Activated naive CD4-positive, alpha-beta T cell treated with anti-CD3 and anti-CD28 coated beads for 36 hours (primary cell): ENCODE measurements at regions of chr15 and their contacts with region 1.

Region 1: GRCh38 chr15:98647774-98648653 is at the start of gene IGF1R:
- DNase-seq: peak; percentile 85
- H3K4me3 Mint-ChIP-seq: peak within 1 kb of the TSS; percentile 87
- H3K27ac Mint-ChIP-seq: peak within 1 kb of the TSS; percentile 94
- H3K4me1 Mint-ChIP-seq: peaks cover 25% of the 10 kb centered on the region
- H3K27me3 Mint-ChIP-seq: no peaks in the 10 kb centered on the region
- total RNA-seq, gene IGF1R: 25.6 to 26.6 TPM

Region 2: GRCh38 chr15:98382139-98382538 is 265.9 kb before region 1 on chr15:
- CTCF ChIA-PET with region 1: no interaction called
- intact Hi-C with region 1: no loop called
- DNase-seq: no peak
- H3K4me3 Mint-ChIP-seq: no peak overlapping the region
- H3K27ac Mint-ChIP-seq: no peak overlapping the region
- H3K4me1 Mint-ChIP-seq: no peaks in the 10 kb centered on the region
- H3K27me3 Mint-ChIP-seq: peaks cover 33% of the 10 kb centered on the region

Region 3: DNA sequence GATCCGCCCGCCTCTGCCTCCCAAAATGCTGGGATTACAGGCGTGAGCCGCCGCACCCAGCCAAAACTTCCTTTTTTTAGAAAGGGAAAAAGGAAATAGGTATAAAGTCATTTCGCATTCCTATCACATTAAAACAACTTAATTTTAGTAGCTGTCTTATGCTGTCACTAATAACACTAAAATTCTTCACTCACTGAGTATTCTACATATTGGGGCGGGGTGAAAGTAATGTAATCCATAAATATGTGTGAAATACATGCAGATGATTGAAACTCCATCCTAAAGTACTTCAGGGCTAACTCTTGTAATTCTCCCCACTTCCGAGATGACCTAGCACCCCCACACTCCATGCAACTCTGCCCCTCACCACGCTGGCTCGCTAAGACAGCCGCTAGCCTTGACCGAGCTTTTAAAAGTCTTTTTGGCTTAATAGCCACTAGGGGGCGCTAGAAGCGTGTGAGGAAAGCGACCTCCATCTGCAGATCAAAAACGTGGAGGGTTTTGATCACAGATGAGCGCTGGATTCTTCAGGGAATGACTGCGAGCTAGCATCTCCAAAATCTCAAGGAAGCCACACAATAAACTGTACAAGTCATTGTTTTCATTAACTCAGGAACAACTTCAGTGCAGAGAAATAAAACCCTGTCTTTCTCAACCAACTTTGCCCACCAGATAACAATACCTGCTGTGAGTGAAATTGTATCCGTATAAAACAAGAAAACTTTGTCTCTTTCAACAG is 129.0 kb before region 1 on chr15:
- CTCF ChIA-PET with region 1: interaction called, 25 read pairs
- intact Hi-C with region 1: loop called (anchors 1 kb)
- DNase-seq: peak; percentile 65
- H3K4me3 Mint-ChIP-seq: no peak overlapping the region
- H3K27ac Mint-ChIP-seq: no peak overlapping the region
- H3K4me1 Mint-ChIP-seq: peaks cover 5% of the 10 kb centered on the region
- H3K27me3 Mint-ChIP-seq: peaks cover 5% of the 10 kb centered on the region

Region 4: GRCh38 chr15:98581715-98582114 is 66.3 kb before region 1 on chr15:
- CTCF ChIA-PET with region 1: no interaction called
- intact Hi-C with region 1: loop called (anchors 5 kb)
- DNase-seq: no peak
- H3K4me3 Mint-ChIP-seq: no peak overlapping the region
- H3K27ac Mint-ChIP-seq: no peak overlapping the region
- H3K4me1 Mint-ChIP-seq: peaks cover 12% of the 10 kb centered on the region
- H3K27me3 Mint-ChIP-seq: peaks cover 31% of the 10 kb centered on the region

Region 5: DNA sequence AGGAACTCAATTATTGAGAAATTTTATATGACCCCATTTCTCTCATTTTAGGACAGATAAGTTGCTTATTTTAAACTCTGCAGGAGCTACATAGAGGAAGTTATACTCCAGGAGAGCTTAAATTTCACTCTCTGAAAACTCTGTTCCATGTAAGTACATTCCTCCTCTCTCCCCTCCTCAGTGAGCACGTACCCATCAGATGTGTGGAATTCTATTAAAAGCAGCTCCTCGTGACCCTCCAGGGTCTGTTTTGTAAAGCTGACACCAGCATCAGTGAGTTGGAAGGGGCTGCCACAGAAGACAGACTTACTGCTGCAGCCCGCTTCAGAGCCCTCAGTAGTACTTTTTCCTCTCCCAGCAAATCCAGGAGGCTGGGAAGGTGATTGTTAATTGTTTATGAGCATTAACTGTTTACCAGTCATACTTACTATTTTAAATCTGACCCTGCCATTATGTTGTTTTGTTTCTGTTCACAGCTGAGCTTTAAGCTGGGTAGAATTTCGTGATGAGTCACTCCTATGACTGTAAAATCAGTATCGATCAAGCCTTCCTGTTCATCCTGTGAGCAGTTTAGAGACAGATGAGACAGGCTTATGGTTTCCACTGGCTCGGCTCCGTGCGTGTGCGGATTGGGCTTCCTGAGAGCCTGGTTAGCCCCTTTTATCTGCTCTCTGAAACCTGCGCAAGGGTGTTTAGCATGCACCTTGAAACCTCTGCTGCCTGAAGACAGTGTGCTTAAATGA is 20.7 kb after region 1 on chr15:
- CTCF ChIA-PET with region 1: interaction called, 5 read pairs
- intact Hi-C with region 1: loop called (anchors 1 kb)
- DNase-seq: peak; percentile 84
- H3K4me3 Mint-ChIP-seq: no peak overlapping the region
- H3K27ac Mint-ChIP-seq: peak overlapping the region; percentile 32
- H3K4me1 Mint-ChIP-seq: peaks cover 80% of the 10 kb centered on the region
- H3K27me3 Mint-ChIP-seq: no peaks in the 10 kb centered on the region

Region 6: GRCh38 chr15:98779463-98780071 is 131.6 kb after region 1 on chr15:
- CTCF ChIA-PET with region 1: interaction called, 6 read pairs
- intact Hi-C with region 1: loop called (anchors 2 kb)
- DNase-seq: peak; percentile 86
- H3K4me3 Mint-ChIP-seq: peak overlapping the region; percentile 51
- H3K27ac Mint-ChIP-seq: no peak overlapping the region
- H3K4me1 Mint-ChIP-seq: peaks cover 49% of the 10 kb centered on the region
- H3K27me3 Mint-ChIP-seq: no peaks in the 10 kb centered on the region

Region 7: DNA sequence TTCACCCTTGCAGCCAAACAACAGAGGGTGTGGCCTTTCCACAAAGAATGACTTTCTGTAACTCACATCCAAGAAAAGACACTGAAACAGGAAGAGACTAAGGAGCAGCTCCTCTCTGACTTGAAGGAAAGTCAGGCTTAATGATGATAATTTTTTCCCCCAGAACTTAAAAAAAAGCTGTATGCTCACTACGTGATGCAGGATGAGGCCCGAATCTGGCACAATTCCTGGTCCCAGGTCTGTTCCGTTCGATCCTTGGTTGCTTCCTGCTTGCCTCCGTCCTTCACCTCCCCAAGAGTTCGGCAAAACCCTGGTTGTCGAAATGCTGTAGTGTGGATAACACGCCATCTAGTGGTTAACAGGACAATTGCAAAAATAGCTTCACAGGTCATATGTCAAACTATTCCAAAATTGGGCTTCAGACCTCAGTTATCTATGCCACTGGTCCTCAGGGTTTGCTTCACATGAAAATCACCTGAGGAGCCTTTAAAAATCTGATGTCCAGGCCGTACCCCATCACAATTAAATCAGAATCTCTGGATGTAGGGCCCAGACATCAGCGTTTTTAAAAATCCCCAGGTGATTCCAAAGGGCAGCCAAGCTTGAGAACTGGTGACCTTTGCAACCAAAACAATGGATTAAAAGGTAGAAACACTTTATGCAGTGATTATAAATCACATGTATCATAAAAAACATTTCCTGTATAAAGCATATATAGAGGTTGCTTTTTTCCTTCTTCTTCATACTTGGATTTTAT is 428.7 kb after region 1 on chr15:
- CTCF ChIA-PET with region 1: no interaction called
- intact Hi-C with region 1: loop called (anchors 5 kb)
- DNase-seq: peak; percentile 61
- H3K4me3 Mint-ChIP-seq: peak overlapping the region; percentile 72
- H3K27ac Mint-ChIP-seq: no peak overlapping the region
- H3K4me1 Mint-ChIP-seq: peaks cover 7% of the 10 kb centered on the region
- H3K27me3 Mint-ChIP-seq: peaks cover 9% of the 10 kb centered on the region